Heart left ventricle (tissue), 16 donors: ENCODE measurements at regions of chr11 and their contacts with region 1.

Region 1: DNA sequence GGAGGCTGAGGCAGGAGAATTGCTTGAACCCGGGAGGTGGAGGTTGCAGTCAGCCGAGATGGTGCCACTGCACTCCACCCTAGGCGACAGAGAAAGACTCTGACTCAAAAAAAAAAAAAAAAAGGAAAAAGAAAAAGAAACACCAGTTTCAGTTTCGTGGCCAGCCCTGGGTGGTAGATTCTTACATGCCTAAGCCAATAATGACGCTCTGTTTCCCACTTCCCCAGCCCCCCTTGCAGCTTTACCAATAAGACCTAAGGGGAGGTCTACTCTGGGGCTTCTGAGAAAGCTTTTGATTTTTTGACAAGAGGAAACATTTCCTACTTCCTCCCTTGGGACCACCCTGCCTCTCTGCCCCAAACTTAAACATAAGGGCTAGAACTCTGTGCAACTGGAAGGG is 30.0 kb upstream of the PTPRJ start:
- DNase-seq: peak in 1 of 5 donors; percentile 27
- ATAC-seq: peak in 1 of 4 donors; percentile 49
- H3K4me3 ChIP-seq: no peak overlapping the region
- H3K27ac ChIP-seq: peak overlapping the region in 1 of 12 donors; percentile 69
- H3K4me1 ChIP-seq: peaks cover 0 to 46% (median 6%) of the 10 kb centered on the region in 12 donors
- H3K27me3 ChIP-seq: no peaks in the 10 kb centered on the region
- CTCF ChIP-seq: no peak
- POLR2A ChIP-seq: no peak

Region 2: DNA sequence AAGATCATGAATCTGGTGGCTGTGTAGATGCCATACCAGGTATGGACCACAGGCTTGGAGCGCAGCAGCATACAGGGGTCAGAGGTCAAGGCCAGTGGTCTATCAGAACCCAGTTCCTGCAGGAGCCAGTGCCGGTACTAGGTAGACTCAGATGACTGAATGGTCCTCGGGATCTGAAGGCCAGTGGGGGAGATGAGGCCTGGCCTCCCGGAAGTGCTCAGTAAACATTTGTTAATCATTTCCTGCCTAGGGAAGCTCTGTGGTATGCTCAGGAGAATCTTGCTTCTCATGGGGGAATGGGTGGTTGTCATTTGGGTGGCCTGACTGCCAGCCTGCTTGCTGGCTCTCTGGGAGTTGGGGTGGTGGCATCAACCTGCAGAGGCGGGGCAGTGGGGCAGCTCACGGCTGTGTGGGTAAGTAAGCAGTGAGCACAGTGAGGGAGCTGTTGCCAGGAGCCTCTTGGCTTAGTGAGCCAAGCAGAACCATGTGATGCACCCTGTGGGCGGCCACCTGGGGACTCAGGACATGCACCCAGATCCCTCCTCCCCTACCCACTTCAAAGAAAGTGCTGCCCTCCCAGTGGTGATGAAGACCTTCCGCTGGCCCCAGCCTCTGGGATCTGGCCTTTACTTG is 63.0 kb after region 1 on chr11:
- intact Hi-C with region 1: loop called in 1 of 10 experiments (anchors 10 kb)
- DNase-seq: peak in 4 of 5 donors; percentile 37 to 58 (median 44)
- ATAC-seq: peak; percentile 68 to 79 (median 73)
- H3K4me3 ChIP-seq: no peak overlapping the region
- H3K27ac ChIP-seq: peak overlapping the region in 1 of 12 donors; percentile 84
- H3K4me1 ChIP-seq: peaks cover 0 to 96% (median 6%) of the 10 kb centered on the region in 12 donors
- H3K27me3 ChIP-seq: no peaks in the 10 kb centered on the region
- CTCF ChIP-seq: no peak
- POLR2A ChIP-seq: no peak

Region 3: GRCh38 chr11:48034926-48035871 is 84.8 kb after region 1 on chr11:
- intact Hi-C with region 1: no loop called
- DNase-seq: peak in 3 of 5 donors; percentile 25 to 64 (median 64)
- ATAC-seq: peak in 3 of 4 donors; percentile 49 to 75 (median 52)
- H3K4me3 ChIP-seq: no peak overlapping the region
- H3K27ac ChIP-seq: peak overlapping the region in 8 of 12 donors; percentile 3 to 87 (median 27)
- H3K4me1 ChIP-seq: peaks cover 0 to 75% (median 20%) of the 10 kb centered on the region in 12 donors
- H3K27me3 ChIP-seq: no peaks in the 10 kb centered on the region
- CTCF ChIP-seq: no peak
- POLR2A ChIP-seq: no peak